ENCODE measurements at regions of chr17 and their contacts with region 1.

Region 1: GRCh38 chr17:16380640-16381495 is at the start of gene UBB:
- DNase-seq: peak; percentile 98
- ATAC-seq: peak; percentile 97
- H3K4me3 Mint-ChIP-seq: peak within 1 kb of the TSS; percentile 90
- H3K27ac Mint-ChIP-seq: peak within 1 kb of the TSS; percentile 98
- H3K4me1 Mint-ChIP-seq: peaks cover 35% of the 10 kb centered on the region
- H3K27me3 Mint-ChIP-seq: no peaks in the 10 kb centered on the region
- total RNA-seq, gene UBB: 1,578 to 1,806 TPM

Region 2: GRCh38 chr17:16215273-16215964 is 165.4 kb before region 1 on chr17 and contains the start of gene NCOR1:
- CTCF ChIA-PET with region 1: no interaction called
- POLR2A ChIA-PET with region 1: interaction called, 3 read pairs
- intact Hi-C with region 1: loop called in 1 of 2 experiments (anchors 1 kb)
- DNase-seq: peak; percentile 96
- ATAC-seq: peak; percentile 87
- H3K4me3 Mint-ChIP-seq: peak within 1 kb of the TSS; percentile 93
- H3K27ac Mint-ChIP-seq: peak within 1 kb of the TSS; percentile 81
- H3K4me1 Mint-ChIP-seq: peaks cover 42% of the 10 kb centered on the region
- H3K27me3 Mint-ChIP-seq: no peaks in the 10 kb centered on the region
- total RNA-seq, gene NCOR1: 110 to 155 TPM

Region 3: DNA sequence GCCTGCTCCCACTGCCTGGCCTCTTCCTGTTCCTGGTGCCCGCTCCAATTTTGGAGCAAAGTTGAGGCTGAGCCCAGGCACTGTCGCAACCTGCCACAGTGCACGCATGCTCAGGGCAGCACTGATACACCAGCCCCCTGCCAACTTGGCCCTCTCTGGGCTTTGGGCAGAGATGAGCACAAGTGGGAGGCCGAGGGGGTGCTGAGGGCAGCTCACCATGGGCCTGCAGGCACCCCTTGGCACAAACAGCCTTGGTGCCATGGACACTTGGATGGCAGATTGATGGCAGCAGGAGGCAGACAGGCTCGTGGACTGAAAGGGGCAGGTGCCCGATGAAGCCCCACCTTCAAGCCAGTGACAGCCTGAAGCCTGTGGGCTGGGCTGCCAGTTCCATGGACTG is 120.9 kb before region 1 on chr17:
- CTCF ChIA-PET with region 1: no interaction called
- POLR2A ChIA-PET with region 1: no interaction called
- intact Hi-C with region 1: no loop called
- DNase-seq: no peak
- ATAC-seq: no peak
- H3K4me3 Mint-ChIP-seq: no peak overlapping the region
- H3K27ac Mint-ChIP-seq: no peak overlapping the region
- H3K4me1 Mint-ChIP-seq: peaks cover 3% of the 10 kb centered on the region
- H3K27me3 Mint-ChIP-seq: no peaks in the 10 kb centered on the region

Region 4: DNA sequence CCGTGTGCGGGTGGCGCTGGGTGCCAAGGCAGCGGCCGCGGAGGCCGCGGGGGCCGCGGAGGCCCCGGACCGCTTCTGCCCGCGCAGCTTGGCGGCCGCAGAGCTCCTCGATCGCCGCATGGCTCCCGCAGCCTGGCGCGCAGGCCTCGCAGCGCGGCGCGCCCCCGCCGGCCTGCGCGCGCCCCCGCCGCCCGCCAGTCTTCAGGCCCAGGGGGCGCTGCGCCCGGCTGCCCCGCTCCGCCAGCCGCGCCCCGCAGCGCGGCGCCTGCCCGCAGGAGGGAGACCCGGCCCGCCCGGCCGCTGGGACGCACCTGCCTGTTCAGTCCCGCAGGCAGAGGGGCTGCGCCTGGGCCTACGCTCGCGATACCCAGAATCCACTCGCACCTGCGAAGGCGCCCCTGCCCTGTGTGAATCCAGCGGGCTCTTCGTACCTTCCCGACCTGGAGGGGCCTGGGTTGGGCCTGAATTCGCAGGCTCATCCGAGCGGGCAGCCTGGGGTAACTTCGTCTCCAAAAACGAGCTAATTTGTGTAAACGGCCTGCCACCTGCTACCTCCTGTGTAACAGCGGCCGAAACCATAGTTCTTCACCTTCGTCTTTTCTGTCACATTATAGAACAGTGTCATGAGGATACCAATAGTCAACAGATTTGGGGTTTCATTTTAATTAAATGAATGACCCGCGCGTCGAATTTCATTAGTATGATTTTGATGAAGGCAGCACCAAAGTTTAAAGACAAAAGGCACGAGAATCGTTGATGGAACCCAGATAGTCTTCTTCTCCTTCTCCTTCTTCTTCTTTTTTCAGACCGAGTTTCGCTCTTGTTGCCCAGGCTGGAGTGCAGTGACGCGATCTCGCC is 27.3 kb before region 1 on chr17 and contains the start of gene CENPV:
- CTCF ChIA-PET with region 1: interaction called, 3 read pairs
- POLR2A ChIA-PET with region 1: interaction called, 9 read pairs
- intact Hi-C with region 1: loop called in 1 of 2 experiments (anchors 1 kb)
- DNase-seq: peak; percentile 81
- ATAC-seq: peak; percentile 82
- H3K4me3 Mint-ChIP-seq: peak within 1 kb of the TSS; percentile 97
- H3K27ac Mint-ChIP-seq: peak within 1 kb of the TSS; percentile 84
- H3K4me1 Mint-ChIP-seq: peaks cover 22% of the 10 kb centered on the region
- H3K27me3 Mint-ChIP-seq: no peaks in the 10 kb centered on the region
- total RNA-seq, gene CENPV: 100 to 132 TPM

Region 5: GRCh38 chr17:16438557-16439302 is 57.9 kb after region 1 on chr17:
- CTCF ChIA-PET with region 1: interaction called, 11 read pairs
- POLR2A ChIA-PET with region 1: interaction called, 25 read pairs
- intact Hi-C with region 1: loop called (anchors 1 kb)
- DNase-seq: peak; percentile 97
- ATAC-seq: peak; percentile 91
- H3K4me3 Mint-ChIP-seq: peak overlapping the region; percentile 99
- H3K27ac Mint-ChIP-seq: peak overlapping the region; percentile 99
- H3K4me1 Mint-ChIP-seq: peaks cover 40% of the 10 kb centered on the region
- H3K27me3 Mint-ChIP-seq: no peaks in the 10 kb centered on the region

Region 6: GRCh38 chr17:16537130-16537458 is 156.2 kb after region 1 on chr17:
- CTCF ChIA-PET with region 1: no interaction called
- POLR2A ChIA-PET with region 1: interaction called, 9 read pairs
- intact Hi-C with region 1: loop called in 1 of 2 experiments (anchors 1 kb)
- DNase-seq: no peak
- ATAC-seq: no peak
- H3K4me3 Mint-ChIP-seq: peak overlapping the region; percentile 92
- H3K27ac Mint-ChIP-seq: no peak overlapping the region
- H3K4me1 Mint-ChIP-seq: peaks cover 9% of the 10 kb centered on the region
- H3K27me3 Mint-ChIP-seq: no peaks in the 10 kb centered on the region

Region 7: GRCh38 chr17:16653209-16654041 is 272.6 kb after region 1 on chr17 and contains the start of gene ZNF624:
- CTCF ChIA-PET with region 1: no interaction called
- POLR2A ChIA-PET with region 1: no interaction called
- intact Hi-C with region 1: loop called in 1 of 2 experiments (anchors 2 kb)
- DNase-seq: peak; percentile 94
- ATAC-seq: peak; percentile 97
- H3K4me3 Mint-ChIP-seq: peak within 1 kb of the TSS; percentile 81
- H3K27ac Mint-ChIP-seq: peak within 1 kb of the TSS; percentile 73
- H3K4me1 Mint-ChIP-seq: peaks cover 18% of the 10 kb centered on the region
- H3K27me3 Mint-ChIP-seq: peaks cover 5% of the 10 kb centered on the region
- total RNA-seq, gene ZNF624: 3.7 to 4.4 TPM